ENCODE measurements at regions of chr2 and their contacts with region 1.

Region 1: DNA sequence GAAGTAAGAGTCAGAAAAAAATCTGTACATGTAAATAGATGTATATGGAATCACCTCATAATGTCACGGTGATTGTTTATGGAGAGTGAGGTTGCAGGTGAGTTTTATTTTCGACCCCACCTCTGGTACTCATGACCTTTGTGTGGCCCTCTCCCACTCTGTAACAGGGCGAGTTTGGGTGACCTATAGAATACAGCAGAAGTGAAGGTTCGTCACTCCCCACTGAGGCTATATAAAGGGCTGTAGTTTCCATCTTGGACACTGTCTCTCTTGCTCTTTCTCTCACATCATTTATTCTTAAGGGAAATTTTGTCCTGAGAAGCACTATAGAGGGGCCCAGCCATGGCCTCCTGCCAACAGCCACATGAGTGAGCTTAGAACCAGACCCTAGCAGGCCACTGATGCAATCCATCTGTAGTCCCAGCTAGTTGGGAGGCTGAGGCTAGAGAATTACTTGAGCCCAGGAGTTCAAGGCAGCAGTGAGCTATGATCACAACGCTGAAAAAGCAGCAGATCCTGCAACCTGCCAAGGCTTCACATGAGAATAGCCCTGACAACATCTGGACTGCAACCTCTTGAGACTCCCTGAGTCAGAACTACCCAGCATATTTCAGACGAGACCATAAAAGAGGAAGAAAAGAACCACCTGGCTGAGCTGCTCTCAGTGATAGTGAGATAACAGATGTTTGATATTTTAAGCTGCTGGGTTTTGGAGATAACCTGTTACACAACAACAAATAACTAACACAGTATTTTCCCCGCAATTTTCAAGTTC is 74.3 kb upstream of the SLC1A4 start:
- DNase-seq: no peak
- ATAC-seq: peak in 3 of 8 donors; percentile 29 to 48 (median 36)
- H3K4me3 ChIP-seq: no peak overlapping the region
- H3K27ac ChIP-seq: no peak overlapping the region
- H3K4me1 ChIP-seq: peaks cover 0 to 12% (median 5%) of the 10 kb centered on the region in 9 donors
- H3K27me3 ChIP-seq: no peaks in the 10 kb centered on the region
- CTCF ChIP-seq: no peak

Region 2: DNA sequence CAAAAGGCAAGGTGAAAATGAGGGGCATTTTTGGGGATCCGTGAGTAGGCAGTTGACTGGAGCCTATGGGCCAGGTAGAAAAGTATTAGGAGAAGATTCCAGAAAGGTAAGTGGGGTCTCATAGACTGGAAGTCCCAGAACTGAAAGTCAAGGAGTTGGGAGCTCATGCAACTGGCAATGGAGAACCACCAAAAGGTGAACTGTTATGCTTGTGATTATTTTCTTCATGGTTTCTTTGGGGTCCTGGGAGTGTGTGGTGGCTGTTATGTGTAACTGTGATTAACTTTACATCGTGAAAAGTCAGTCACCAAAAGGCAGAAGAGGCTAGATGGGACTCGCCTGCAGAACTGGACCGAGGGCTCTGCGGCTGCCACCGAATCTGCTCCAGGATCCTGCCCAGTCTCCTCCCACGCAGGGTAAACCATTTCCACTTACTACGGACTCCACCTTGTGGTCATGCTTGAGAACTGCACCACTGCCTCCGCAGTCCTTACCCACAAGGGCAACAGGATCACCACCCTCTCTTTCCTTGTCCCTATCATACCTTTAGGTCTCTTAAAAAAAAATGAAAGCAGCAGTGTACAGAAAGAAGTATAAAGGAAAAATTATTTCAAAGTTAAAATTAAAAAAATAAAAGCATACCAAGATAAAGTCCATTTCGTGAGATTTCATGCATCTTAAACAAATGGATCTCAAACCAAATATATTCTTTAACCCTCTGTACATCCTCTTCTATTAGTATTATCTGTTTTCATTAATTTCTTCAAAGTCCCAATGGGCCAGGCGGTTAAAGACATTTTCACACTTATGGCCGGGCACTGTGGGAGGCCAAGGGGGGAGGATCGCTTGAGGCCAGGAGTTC is 125.7 kb after region 1 on chr2:
- intact Hi-C with region 1: loop called (anchors 1 to 5 kb)
- DNase-seq: peak; percentile 79 to 90
- ATAC-seq: peak; percentile 94 to 97 (median 95)
- H3K4me3 ChIP-seq: peak overlapping the region in 4 of 10 donors; percentile 11 to 28 (median 18)
- H3K27ac ChIP-seq: no peak overlapping the region
- H3K4me1 ChIP-seq: peaks cover 0 to 26% (median 15%) of the 10 kb centered on the region in 9 donors
- H3K27me3 ChIP-seq: no peaks in the 10 kb centered on the region
- CTCF ChIP-seq: peak; percentile 84 to 99 (median 96)

Region 3: GRCh38 chr2:65169760-65170136 is 254.8 kb after region 1 on chr2:
- intact Hi-C with region 1: loop called in 3 of 10 experiments (anchors 5 to 10 kb)
- DNase-seq: no peak
- ATAC-seq: no peak
- H3K4me3 ChIP-seq: no peak overlapping the region
- H3K27ac ChIP-seq: no peak overlapping the region
- H3K4me1 ChIP-seq: peaks cover 0 to 8% (median 4%) of the 10 kb centered on the region in 9 donors
- H3K27me3 ChIP-seq: no peaks in the 10 kb centered on the region
- CTCF ChIP-seq: no peak

Region 4: DNA sequence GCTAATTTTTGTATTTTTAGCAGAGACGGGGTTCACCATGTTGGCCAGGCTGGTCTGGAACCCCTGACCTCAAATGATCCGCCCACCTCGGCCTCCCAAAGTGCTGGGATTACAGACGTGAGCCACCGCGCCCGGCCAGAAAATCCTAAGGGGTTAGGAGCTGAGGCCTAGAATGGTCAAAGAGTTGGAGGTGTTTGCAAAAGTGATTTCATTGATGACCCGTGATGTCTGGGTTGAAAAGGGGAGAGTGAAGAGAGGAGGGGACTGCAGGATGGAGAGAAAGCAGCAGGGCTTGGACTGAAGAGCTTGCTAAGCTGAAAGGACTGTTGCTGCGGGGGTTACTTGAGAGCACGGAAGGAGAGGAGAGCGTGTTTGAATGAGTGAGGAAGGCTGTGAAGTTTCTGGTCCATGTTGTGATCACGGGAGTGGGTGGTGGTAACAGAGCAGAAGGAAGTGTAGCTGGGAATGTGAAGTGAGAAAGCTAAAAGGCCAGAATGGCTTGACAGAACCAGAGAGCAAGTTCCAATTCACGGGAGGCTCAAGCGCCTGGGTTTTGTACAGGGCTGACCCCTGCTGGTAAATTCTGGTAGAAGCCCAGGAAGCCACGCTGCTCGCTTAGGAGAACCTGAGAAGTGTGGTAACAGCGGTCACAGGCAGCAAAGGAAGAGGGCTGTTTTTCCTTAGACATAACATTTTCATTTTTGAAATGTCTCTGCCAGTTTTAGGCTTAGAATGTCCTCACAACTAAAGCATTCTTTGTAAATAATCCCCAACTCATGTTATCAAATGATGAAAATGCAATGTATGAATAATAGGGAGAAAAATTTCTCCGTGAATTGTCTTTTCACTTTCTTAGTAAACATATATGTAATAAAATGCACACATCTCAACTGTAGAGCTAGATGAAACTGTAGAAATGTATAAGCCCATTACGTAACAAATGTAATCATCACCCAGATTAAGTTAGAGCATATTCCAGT is 272.2 kb after region 1 on chr2:
- intact Hi-C with region 1: loop called in 6 of 10 experiments (anchors 1 to 10 kb)
- DNase-seq: peak; percentile 55 to 77
- ATAC-seq: peak; percentile 68 to 96 (median 93)
- H3K4me3 ChIP-seq: no peak overlapping the region
- H3K27ac ChIP-seq: no peak overlapping the region
- H3K4me1 ChIP-seq: peaks cover 0 to 10% (median 0%) of the 10 kb centered on the region in 9 donors
- H3K27me3 ChIP-seq: no peaks in the 10 kb centered on the region
- CTCF ChIP-seq: peak; percentile 61 to 90 (median 80)